Activated CD4-positive, alpha-beta memory T cell treated with anti-CD3 and anti-CD28 coated beads, Interleukin-2, amount 10 ng/mL, durations not matched to agents 7 days and 5 days (primary cell): ENCODE measurements at regions of chr7 and their contacts with region 1.

Region 1: GRCh38 chr7:150567169-150567568 is at the start of gene GIMAP4:
- DNase-seq: peak; percentile 39
- H3K4me3 Mint-ChIP-seq: peak within 1 kb of the TSS; percentile 95
- H3K27ac Mint-ChIP-seq: peak within 1 kb of the TSS; percentile 93
- H3K4me1 Mint-ChIP-seq: peaks cover 70% of the 10 kb centered on the region
- H3K27me3 Mint-ChIP-seq: no peaks in the 10 kb centered on the region
- total RNA-seq, gene GIMAP4: 277 to 282 TPM

Region 2: DNA sequence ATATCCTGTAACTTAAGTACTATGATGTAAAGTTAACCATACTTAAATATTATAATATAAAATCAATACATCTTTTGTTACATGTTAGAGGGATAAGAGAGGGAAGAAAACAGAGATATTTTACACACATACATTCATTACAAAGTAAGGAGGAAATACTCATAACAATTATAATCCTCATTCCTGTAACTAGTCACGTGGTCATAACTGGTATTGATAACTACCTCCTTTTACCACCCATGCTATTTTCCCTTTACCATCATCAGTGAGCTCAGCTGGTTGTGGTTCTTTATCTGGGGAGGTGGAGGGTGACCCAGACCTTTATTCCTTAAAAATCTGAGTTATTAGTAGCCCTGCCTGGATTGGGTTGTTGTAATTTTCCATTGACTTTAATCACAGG is 108.4 kb before region 1 on chr7:
- CTCF ChIA-PET with region 1: no interaction called
- POLR2A ChIA-PET with region 1: no interaction called
- DNase-seq: no peak
- H3K4me3 Mint-ChIP-seq: no peak overlapping the region
- H3K27ac Mint-ChIP-seq: no peak overlapping the region
- H3K4me1 Mint-ChIP-seq: peaks cover 64% of the 10 kb centered on the region
- H3K27me3 Mint-ChIP-seq: no peaks in the 10 kb centered on the region

Region 3: GRCh38 chr7:150481186-150481920 is 85.8 kb before region 1 on chr7:
- CTCF ChIA-PET with region 1: interaction called, 5 read pairs
- POLR2A ChIA-PET with region 1: interaction called, 29 read pairs
- DNase-seq: peak; percentile 70
- H3K4me3 Mint-ChIP-seq: peak overlapping the region; percentile 81
- H3K27ac Mint-ChIP-seq: peak overlapping the region; percentile 99
- H3K4me1 Mint-ChIP-seq: peaks cover 95% of the 10 kb centered on the region
- H3K27me3 Mint-ChIP-seq: no peaks in the 10 kb centered on the region

Region 4: GRCh38 chr7:150520145-150520544 is 47.0 kb before region 1 on chr7:
- CTCF ChIA-PET with region 1: interaction called, 7 read pairs
- POLR2A ChIA-PET with region 1: interaction called, 68 read pairs
- DNase-seq: peak; percentile 49
- H3K4me3 Mint-ChIP-seq: peak overlapping the region; percentile 100
- H3K27ac Mint-ChIP-seq: peak overlapping the region; percentile 82
- H3K4me1 Mint-ChIP-seq: peaks cover 38% of the 10 kb centered on the region
- H3K27me3 Mint-ChIP-seq: no peaks in the 10 kb centered on the region

Region 5: GRCh38 chr7:150620617-150621371 is 53.6 kb after region 1 on chr7:
- CTCF ChIA-PET with region 1: interaction called, 5 read pairs
- POLR2A ChIA-PET with region 1: interaction called, 13 read pairs
- DNase-seq: no peak
- H3K4me3 Mint-ChIP-seq: no peak overlapping the region
- H3K27ac Mint-ChIP-seq: peak overlapping the region; percentile 82
- H3K4me1 Mint-ChIP-seq: peaks cover 56% of the 10 kb centered on the region
- H3K27me3 Mint-ChIP-seq: no peaks in the 10 kb centered on the region

Region 6: GRCh38 chr7:150685219-150686029 is 118.3 kb after region 1 on chr7 and contains the start of gene GIMAP2:
- CTCF ChIA-PET with region 1: interaction called, 5 read pairs
- POLR2A ChIA-PET with region 1: interaction called, 21 read pairs
- DNase-seq: peak; percentile 33
- H3K4me3 Mint-ChIP-seq: peak within 1 kb of the TSS; percentile 100
- H3K27ac Mint-ChIP-seq: peak within 1 kb of the TSS; percentile 98
- H3K4me1 Mint-ChIP-seq: peaks cover 76% of the 10 kb centered on the region
- H3K27me3 Mint-ChIP-seq: no peaks in the 10 kb centered on the region
- total RNA-seq, gene GIMAP2: 113 to 120 TPM

Region 7: DNA sequence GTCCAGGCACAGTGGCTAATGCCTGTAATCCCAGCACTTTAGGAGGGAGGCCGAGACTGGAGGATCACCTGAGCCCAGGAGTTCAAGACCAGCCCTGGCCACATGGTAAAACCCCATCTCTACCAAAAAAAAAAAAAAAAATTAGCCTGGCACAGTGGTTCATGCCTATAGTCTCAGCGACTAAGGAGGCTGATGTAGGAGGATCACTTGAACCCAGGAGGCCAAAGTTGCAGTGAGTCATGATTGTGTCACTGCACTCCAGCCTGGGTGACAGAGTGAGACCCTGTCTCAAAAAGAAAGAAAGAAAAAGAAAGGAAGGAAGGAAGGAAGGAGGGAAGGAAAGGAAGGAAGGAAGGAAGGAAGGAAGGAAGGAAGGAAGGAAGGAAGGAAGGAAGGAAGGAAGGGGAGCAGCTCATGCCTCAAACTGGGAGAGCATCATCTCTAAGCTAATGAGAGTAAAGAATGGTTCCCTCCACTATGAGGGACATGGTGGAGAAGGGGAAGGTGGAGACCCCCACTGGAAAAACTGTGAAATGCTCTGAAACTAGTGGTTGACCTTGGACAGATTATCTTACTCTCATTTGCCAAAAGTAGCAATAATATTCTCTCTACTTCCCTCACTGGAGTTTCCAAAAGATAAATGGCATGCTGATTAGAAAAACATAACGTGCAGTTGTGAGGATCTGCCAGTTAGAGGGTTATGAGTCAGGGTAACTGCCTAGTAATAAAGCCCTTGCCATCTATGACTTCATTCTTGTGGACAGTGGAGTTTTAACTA is 186.8 kb after region 1 on chr7:
- CTCF ChIA-PET with region 1: interaction called, 39 read pairs
- POLR2A ChIA-PET with region 1: interaction called, 42 read pairs
- DNase-seq: no peak
- H3K4me3 Mint-ChIP-seq: no peak overlapping the region
- H3K27ac Mint-ChIP-seq: peak overlapping the region; percentile 94
- H3K4me1 Mint-ChIP-seq: peaks cover 55% of the 10 kb centered on the region
- H3K27me3 Mint-ChIP-seq: no peaks in the 10 kb centered on the region